B cell (primary cell): ENCODE measurements at regions of chr7 and their contacts with region 1.

Region 1: GRCh38 chr7:5665094-5666025 is 116.1 kb downstream of the RNF216 start:
- DNase-seq: peak; percentile 78
- ATAC-seq: peak; percentile 52
- H3K4me3 ChIP-seq: no peak overlapping the region
- H3K4me3 Mint-ChIP-seq: no peak overlapping the region
- H3K27ac ChIP-seq: no peak overlapping the region
- H3K27ac Mint-ChIP-seq: no peak overlapping the region
- H3K4me1 ChIP-seq: peaks cover 19 to 28% of the 10 kb centered on the region in 2 donors
- H3K4me1 Mint-ChIP-seq: peaks cover 29% of the 10 kb centered on the region
- H3K27me3 ChIP-seq: no peaks in the 10 kb centered on the region
- H3K27me3 Mint-ChIP-seq: no peaks in the 10 kb centered on the region
- CTCF ChIP-seq: peak; percentile 85

Region 2: DNA sequence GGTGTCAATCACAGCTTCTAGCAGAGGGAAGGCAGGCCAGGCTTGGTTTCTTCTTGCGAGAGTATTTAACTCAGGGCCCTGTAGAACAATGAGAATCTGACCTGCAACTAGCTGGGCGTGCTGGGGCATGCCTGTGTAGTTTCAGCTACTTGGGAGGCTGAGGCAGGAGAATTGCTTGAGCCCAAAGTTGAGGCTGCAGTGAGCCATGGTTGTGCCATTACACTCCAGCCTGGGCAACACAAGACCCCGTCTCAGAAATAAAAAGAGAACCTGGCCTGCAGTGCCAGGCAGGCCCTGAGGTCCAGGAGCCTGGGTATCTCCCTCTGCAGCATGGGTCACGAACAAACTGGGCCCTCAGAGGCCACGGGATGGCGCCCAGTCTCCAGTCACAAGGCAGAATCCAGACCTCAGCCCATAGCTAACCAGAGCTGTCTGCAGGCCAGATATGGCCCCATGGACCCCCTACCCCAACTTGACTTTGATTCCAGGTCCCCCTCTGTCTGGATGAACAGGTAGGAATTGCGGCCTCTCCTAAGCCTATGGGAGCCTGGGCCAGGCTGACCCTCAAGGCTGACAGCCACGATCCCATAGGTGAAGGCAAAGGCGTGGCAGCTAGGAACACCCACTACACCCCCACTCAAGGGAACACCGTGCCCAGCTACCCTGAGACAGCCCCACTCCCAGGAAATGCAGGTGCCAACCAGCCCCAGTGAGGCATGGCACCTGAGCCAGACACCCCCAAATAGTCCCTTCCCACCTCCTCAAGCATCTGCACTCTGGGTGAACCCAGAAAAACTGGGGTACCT is 139.1 kb before region 1 on chr7:
- CTCF ChIA-PET with region 1: interaction called, 13 read pairs
- POLR2A ChIA-PET with region 1: interaction called, 3 read pairs
- intact Hi-C with region 1: no loop called
- DNase-seq: peak; percentile 52
- ATAC-seq: no peak
- H3K4me3 ChIP-seq: peak overlapping the region in 1 of 5 experiments; percentile 82
- H3K4me3 Mint-ChIP-seq: peak overlapping the region; percentile 98
- H3K27ac ChIP-seq: peak overlapping the region; percentile 37 to 51
- H3K27ac Mint-ChIP-seq: peak overlapping the region; percentile 88
- H3K4me1 ChIP-seq: peaks cover 24 to 40% of the 10 kb centered on the region in 2 donors
- H3K4me1 Mint-ChIP-seq: peaks cover 56% of the 10 kb centered on the region
- H3K27me3 ChIP-seq: no peaks in the 10 kb centered on the region
- H3K27me3 Mint-ChIP-seq: no peaks in the 10 kb centered on the region
- CTCF ChIP-seq: no peak

Region 3: DNA sequence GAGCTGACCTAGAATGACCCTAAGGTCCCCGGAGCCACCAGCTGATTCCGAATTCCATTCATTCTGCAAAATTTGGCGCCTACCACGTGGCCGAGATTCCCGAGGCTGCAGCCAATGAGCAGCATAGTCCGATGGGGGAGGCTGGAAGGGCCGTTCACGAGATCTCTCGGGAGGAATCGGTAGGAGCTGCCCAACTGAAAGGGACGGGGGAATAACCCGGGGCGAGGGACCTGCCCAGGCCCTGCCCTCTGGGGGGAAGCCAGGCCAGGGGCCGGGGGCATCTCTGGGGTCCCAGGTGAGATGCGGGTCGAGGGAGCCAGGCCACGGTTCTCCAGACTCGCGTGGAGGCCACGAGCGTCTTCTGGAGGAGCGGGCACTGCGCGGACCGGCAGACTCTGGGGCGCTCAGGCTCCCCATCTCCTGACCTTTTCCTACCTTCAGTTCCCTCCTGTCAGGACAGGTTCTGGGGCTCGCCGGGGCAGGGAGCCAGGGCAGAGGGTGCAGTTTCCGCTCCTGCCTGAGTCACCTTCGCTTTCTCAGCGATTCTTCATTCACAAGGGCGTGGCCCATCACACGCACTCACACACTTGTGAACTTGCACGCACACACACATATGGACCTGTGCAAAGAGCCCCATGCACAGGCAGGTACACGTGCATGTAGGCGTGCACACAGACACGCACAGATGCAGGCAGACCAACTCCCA is 57.3 kb before region 1 on chr7:
- CTCF ChIA-PET with region 1: no interaction called
- POLR2A ChIA-PET with region 1: no interaction called
- intact Hi-C with region 1: no loop called
- DNase-seq: no peak
- ATAC-seq: no peak
- H3K4me3 ChIP-seq: no peak overlapping the region
- H3K4me3 Mint-ChIP-seq: no peak overlapping the region
- H3K27ac ChIP-seq: no peak overlapping the region
- H3K27ac Mint-ChIP-seq: no peak overlapping the region
- H3K4me1 ChIP-seq: no peaks in the 10 kb centered on the region
- H3K4me1 Mint-ChIP-seq: no peaks in the 10 kb centered on the region
- H3K27me3 ChIP-seq: no peaks in the 10 kb centered on the region
- H3K27me3 Mint-ChIP-seq: no peaks in the 10 kb centered on the region
- CTCF ChIP-seq: no peak

Region 4: DNA sequence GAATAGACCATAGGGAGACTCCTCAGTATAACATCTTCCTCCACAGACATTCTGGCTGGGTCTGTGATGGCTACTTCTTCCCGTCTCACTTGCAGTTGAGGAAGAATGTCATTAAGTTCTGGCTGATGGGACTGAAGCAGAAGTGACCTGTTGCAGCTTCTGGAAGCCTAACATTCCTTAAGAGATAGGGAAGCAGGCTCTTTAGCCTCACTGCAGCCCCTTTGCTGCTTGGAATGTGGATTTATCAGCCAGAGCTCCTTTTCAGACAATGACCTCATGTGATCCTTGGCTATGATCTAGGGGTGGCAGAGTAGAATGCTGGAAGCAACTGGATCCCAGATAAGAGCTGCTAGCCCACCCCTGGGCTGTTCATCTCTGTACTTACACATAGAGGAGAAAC is 26.4 kb before region 1 on chr7:
- CTCF ChIA-PET with region 1: interaction called, 10 read pairs
- POLR2A ChIA-PET with region 1: interaction called, 3 read pairs
- intact Hi-C with region 1: no loop called
- DNase-seq: no peak
- ATAC-seq: no peak
- H3K4me3 ChIP-seq: no peak overlapping the region
- H3K4me3 Mint-ChIP-seq: no peak overlapping the region
- H3K27ac ChIP-seq: no peak overlapping the region
- H3K27ac Mint-ChIP-seq: peak overlapping the region; percentile 3
- H3K4me1 ChIP-seq: peaks cover 4 to 5% of the 10 kb centered on the region in 2 donors
- H3K4me1 Mint-ChIP-seq: peaks cover 8% of the 10 kb centered on the region
- H3K27me3 ChIP-seq: no peaks in the 10 kb centered on the region
- H3K27me3 Mint-ChIP-seq: no peaks in the 10 kb centered on the region
- CTCF ChIP-seq: no peak

Region 5: DNA sequence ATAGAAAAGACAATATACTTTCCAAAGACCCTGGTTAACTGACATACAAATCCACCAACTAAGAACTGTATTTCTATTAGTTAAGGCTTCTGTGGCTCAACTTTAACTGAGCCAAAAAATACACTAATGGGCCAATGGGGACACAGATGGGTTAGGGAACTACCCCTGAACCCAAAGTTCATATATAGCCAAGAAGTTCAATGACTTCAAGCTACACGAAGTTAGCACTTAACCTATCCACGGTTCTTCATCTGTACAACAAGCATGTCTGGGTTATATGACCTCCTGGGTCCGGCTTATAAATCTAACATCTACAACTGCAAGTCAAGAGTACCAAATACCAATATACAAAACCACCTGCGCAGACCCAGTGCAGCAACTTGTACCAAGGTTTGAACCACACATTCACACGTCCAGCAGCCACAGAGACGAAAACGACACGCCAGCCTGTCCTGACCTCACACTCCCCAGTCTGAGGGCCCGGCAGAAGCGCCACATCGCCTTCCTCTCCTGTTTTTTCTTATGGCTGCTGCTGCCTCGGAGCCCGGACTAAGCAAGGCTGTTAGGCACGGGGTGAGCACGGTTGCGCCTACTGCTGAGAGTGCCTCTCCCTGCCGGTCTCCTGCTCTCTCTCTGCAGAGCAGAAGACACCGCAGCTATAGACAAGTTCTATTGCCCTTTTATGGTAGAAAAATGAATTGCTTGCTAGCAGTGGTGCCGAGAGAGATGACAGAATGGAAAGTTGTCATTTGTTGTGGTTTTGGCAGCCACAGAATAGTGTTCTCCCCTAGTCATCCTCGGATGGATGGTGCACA is 29.8 kb after region 1 on chr7:
- CTCF ChIA-PET with region 1: interaction called, 129 read pairs
- POLR2A ChIA-PET with region 1: no interaction called
- intact Hi-C with region 1: no loop called
- DNase-seq: peak; percentile 58
- ATAC-seq: peak; percentile 44
- H3K4me3 ChIP-seq: peak overlapping the region; percentile 39 to 56 (median 49)
- H3K4me3 Mint-ChIP-seq: peak overlapping the region; percentile 88
- H3K27ac ChIP-seq: peak overlapping the region; percentile 93 to 94
- H3K27ac Mint-ChIP-seq: peak overlapping the region; percentile 93
- H3K4me1 ChIP-seq: peaks cover 83 to 96% of the 10 kb centered on the region in 2 donors
- H3K4me1 Mint-ChIP-seq: peaks cover 94% of the 10 kb centered on the region
- H3K27me3 ChIP-seq: no peaks in the 10 kb centered on the region
- H3K27me3 Mint-ChIP-seq: no peaks in the 10 kb centered on the region
- CTCF ChIP-seq: no peak

Region 6: GRCh38 chr7:5713124-5713912 is 48.0 kb after region 1 on chr7:
- CTCF ChIA-PET with region 1: interaction called, 16 read pairs
- POLR2A ChIA-PET with region 1: no interaction called
- intact Hi-C with region 1: no loop called
- DNase-seq: no peak
- ATAC-seq: no peak
- H3K4me3 ChIP-seq: no peak overlapping the region
- H3K4me3 Mint-ChIP-seq: no peak overlapping the region
- H3K27ac ChIP-seq: no peak overlapping the region
- H3K27ac Mint-ChIP-seq: no peak overlapping the region
- H3K4me1 ChIP-seq: no peaks in the 10 kb centered on the region
- H3K4me1 Mint-ChIP-seq: no peaks in the 10 kb centered on the region
- H3K27me3 ChIP-seq: no peaks in the 10 kb centered on the region
- H3K27me3 Mint-ChIP-seq: no peaks in the 10 kb centered on the region
- CTCF ChIP-seq: no peak